Posterior vena cava (tissue), 2 donors: ENCODE measurements at regions of chr6 and their contacts with region 1.

Region 1: GRCh38 chr6:143783077-143783476 is 60.1 kb upstream of the LTV1 start:
- DNase-seq: no peak

Region 2: GRCh38 chr6:143677891-143678791 is 104.9 kb before region 1 on chr6 and contains the start of gene PHACTR2:
- intact Hi-C with region 1: loop called in 1 of 2 experiments (anchors 1 kb)
- DNase-seq: peak; percentile 91
- total RNA-seq, gene PHACTR2: 53.8 to 72.6 TPM